Colonic mucosa (tissue), 4 donors: ENCODE measurements at regions of chr10 and their contacts with region 1.

Region 1: GRCh38 chr10:28663576-28664313 is 13.6 kb upstream of the BAMBI start:
- DNase-seq: peak; percentile 80
- H3K4me3 ChIP-seq: no peak overlapping the region
- H3K27ac ChIP-seq: no peak overlapping the region
- H3K4me1 ChIP-seq: no peaks in the 10 kb centered on the region
- H3K27me3 ChIP-seq: peaks cover 12% of the 10 kb centered on the region
- CTCF ChIP-seq: peak; percentile 87

Region 2: DNA sequence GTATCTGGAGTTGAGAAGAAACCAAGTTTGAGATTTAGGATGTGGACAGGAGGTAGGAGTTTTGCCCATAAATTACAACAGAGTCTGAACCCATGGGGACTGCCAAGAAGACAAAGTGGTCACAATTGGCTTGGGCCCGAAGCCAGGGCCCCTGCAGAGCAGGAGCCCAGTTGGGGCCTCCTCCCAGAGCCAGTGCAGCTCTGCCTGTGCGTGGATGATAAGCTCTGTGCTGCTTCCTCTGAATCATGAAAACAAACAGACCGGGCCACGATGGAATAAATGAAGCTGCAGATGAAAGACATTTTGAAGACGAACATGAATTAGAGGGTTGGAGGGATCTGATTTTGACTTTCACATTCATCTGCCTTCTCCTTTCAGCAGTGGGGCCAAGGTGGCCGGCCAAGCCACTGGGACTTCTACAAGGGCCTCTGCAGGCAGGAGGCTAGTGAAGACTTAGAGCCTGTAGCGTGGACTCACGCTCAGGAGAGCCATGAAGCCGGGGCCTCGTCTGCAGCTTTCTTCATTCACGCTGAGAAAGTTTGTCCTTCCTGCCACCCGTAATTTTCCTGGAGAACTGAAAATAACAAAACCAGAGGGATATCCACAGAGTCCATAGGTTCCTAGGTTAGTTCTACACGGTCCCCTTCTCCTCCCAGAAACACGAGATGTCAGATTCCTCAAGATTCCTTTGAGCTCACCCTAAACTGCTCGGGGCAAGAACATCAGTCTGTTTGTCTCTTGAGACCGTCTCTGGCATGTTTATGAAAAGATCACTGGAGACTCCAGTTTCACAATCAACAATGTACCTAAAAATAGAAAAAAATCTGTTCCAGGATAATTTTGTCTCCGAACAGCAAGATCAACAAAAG is 468.4 kb after region 1 on chr10:
- intact Hi-C with region 1: loop called (anchors 5 kb)
- DNase-seq: no peak
- H3K4me3 ChIP-seq: no peak overlapping the region
- H3K27ac ChIP-seq: no peak overlapping the region
- H3K4me1 ChIP-seq: no peaks in the 10 kb centered on the region
- H3K27me3 ChIP-seq: no peaks in the 10 kb centered on the region
- CTCF ChIP-seq: no peak

Region 3: DNA sequence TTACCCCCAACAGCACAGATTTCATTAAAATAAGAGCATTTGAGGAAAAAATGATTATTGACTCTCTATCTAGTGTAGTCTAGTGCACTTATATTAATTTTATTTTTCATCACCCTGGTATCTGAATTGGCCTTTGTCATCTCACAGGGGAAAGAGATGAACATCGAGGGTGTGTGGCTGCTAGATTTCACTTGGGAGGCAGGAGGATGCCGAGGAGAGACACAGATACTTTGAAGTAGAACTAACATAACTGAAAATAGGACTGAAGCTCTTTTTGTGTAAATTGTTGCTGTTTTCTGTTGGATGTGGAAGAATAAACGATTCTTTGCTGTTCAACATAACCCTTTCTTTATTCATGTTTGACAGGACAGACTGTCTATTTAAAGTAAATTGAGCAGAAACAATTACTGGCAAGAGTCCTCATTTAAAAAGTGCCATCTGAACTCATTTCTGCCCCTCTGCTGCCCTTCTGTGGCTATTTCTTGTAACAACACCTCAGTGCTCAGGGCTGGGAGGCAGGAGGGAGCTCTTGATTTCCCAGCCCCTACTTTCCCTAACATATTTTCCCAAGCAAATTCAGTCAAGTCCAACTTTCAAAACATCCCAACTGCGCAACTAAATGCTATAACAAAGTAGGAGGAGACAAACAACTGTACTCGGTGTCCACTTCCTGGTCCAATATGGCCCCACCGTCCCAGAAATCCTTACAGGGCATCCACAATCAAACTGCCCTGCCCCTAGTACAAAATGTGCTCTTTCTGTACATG is 640.7 kb after region 1 on chr10:
- intact Hi-C with region 1: loop called (anchors 10 kb)
- DNase-seq: peak; percentile 46
- H3K4me3 ChIP-seq: no peak overlapping the region
- H3K27ac ChIP-seq: no peak overlapping the region
- H3K4me1 ChIP-seq: no peaks in the 10 kb centered on the region
- H3K27me3 ChIP-seq: no peaks in the 10 kb centered on the region
- CTCF ChIP-seq: peak; percentile 62